ENCODE measurements at regions of chr5 and their contacts with region 1.

Region 1: GRCh38 chr5:16465544-16466466 is at the start of gene ZNF622:
- DNase-seq: peak; percentile 87 to 97 (median 88)
- ATAC-seq: peak; percentile 95
- H3K4me3 ChIP-seq: peak within 1 kb of the TSS; percentile 84
- H3K27ac ChIP-seq: peak within 1 kb of the TSS; percentile 85
- H3K4me1 ChIP-seq: peaks cover 13 to 18% of the 10 kb centered on the region in 2 experiments; a peak in 4 of 5 replicates
- H3K27me3 ChIP-seq: no peaks in the 10 kb centered on the region
- CTCF ChIP-seq: no peak
- EP300 ChIP-seq: no peak
- POLR2A ChIP-seq: peak; percentile 98
- RAD21 ChIP-seq: no peak
- polyA plus RNA-seq, gene ZNF622: 9.6 TPM

Region 2: DNA sequence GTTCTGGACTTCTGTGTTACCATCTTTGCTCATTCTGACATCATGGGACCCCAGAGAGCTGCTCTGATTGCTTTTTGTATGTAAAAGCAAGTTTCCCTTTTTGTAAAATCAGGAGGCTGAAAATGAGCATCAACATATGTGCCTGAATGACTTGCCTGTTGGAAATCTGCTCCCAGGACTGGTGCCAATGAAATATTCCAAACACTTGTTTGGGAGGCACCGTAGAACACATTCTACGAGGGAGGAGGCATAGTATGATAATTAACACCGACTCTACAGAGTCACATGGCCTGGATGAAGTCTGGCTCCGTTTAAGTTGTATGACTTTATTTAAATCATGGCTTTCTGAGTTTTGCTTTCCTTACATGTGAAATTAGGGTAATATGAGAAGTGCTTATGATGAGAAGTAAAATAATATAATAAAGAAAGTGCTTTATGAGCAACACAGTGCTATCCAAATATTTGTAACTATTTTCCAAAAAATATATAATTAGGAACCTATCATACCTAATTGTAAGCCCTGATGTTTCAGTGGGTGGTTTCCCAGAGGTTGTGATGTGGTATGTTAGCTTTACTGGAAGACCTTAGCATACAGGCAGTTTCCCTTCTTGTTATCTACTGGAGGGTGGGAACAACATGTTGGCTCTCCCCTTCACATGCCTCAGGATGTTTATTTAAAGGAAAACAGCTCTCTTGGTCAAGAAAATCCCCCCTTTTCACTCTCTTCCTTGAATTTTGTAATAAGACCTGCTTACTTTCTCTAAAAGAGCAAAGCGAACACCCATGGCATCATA is 727.7 kb before region 1 on chr5:
- CTCF ChIA-PET with region 1: no interaction called
- POLR2A ChIA-PET with region 1: no interaction called
- in situ Hi-C with region 1: no loop called
- intact Hi-C with region 1: no loop called
- DNase-seq: no peak
- ATAC-seq: no peak
- H3K4me3 ChIP-seq: no peak overlapping the region
- H3K27ac ChIP-seq: no peak overlapping the region
- H3K4me1 ChIP-seq: no peaks in the 10 kb centered on the region
- H3K27me3 ChIP-seq: no peaks in the 10 kb centered on the region
- CTCF ChIP-seq: no peak
- EP300 ChIP-seq: no peak
- POLR2A ChIP-seq: no peak
- RAD21 ChIP-seq: no peak

Region 3: DNA sequence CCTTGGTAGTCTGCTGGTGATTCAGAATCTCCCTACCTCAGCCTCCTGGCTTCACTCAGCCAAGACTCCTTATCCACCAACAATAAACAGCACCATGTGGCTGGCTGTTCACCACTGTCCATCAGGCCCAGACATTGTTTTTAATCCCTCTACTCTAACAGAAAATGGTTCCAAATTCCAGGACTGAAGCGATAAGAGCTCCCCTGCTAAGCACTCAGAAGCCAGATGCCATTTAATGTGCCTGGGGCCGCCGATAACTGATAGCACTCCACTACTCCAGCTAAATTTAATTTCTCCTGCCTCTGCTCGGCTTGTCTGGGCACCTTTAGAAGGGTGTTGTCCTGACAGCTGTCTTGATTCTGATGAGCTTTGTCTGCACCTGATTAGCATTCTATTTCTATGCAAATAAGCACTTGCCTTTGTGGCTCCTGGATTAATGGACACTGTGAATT is 47.3 kb before region 1 on chr5:
- CTCF ChIA-PET with region 1: no interaction called
- POLR2A ChIA-PET with region 1: no interaction called
- in situ Hi-C with region 1: no loop called
- intact Hi-C with region 1: loop called (anchors 2 kb)
- DNase-seq: peak; percentile 90 to 96 (median 92)
- ATAC-seq: peak; percentile 99
- H3K4me3 ChIP-seq: no peak overlapping the region
- H3K27ac ChIP-seq: peak overlapping the region; percentile 27; the same call in 1 of the 3 replicates
- H3K4me1 ChIP-seq: peaks cover 13 to 15% of the 10 kb centered on the region in 2 experiments; a peak in 3 of 5 replicates
- H3K27me3 ChIP-seq: 0 out of 5 replicates have a peak, but pooled peaks cover 0 to 3% of the 10 kb centered on the region in 2 experiments
- CTCF ChIP-seq: no peak
- EP300 ChIP-seq: peak; percentile 92
- POLR2A ChIP-seq: no peak
- RAD21 ChIP-seq: peak in 1 of 2 experiments; percentile 17; a peak in 1 of 4 replicates

Measured in K562 (cell line).